ENCODE measurements at regions of chr11 and their contacts with region 1.

Region 1: GRCh38 chr11:24145411-24145810 is 351.4 kb upstream of the LUZP2 start:
- DNase-seq: no peak
- H3K4me3 ChIP-seq: no peak overlapping the region
- H3K4me3 Mint-ChIP-seq: no peak overlapping the region
- H3K27ac Mint-ChIP-seq: no peak overlapping the region
- H3K4me1 ChIP-seq: no peaks in the 10 kb centered on the region
- H3K4me1 Mint-ChIP-seq: no peaks in the 10 kb centered on the region
- H3K27me3 ChIP-seq: no peaks in the 10 kb centered on the region
- H3K27me3 Mint-ChIP-seq: peaks cover 3% of the 10 kb centered on the region
- CTCF ChIP-seq: no peak

Region 2: DNA sequence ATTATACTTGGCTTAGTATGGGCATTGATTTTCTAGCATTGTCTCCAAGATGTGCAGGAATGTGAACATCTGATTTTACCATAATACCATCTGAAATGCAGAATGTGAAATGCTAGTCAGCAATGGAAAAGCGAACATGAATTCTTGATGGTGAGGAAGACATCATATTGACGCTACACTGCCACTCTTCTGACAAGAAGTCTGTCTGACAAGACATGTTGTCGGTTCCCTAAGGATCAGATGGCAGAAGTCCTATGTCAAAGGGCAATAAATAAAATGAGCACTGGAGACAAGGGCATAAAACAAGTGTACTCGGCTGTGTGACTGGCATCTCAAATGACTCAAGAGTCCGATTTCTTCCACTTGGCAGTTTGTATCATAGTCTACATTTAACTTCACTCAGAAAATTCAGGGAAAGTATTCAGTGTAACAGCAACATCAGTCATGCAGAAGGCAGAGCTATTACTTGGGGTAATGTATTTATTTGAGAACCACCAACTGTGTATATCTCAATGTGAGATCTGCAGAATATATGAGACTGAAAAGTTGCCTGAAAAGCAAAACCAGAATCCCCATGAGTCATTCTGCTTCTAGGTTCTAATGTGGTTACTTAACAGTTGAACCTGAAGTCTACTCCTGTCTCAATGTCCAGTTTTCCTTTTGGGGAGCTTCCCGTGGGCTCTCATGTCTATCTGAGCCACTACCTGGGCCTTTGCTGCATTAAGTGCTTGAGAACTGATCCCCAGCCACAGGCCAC is 1755.7 kb before region 1 on chr11:
- CTCF ChIA-PET with region 1: no interaction called
- POLR2A ChIA-PET with region 1: no interaction called
- intact Hi-C with region 1: loop called (anchors 10 kb)
- DNase-seq: no peak
- H3K4me3 ChIP-seq: no peak overlapping the region
- H3K4me3 Mint-ChIP-seq: no peak overlapping the region
- H3K27ac Mint-ChIP-seq: no peak overlapping the region
- H3K4me1 ChIP-seq: no peaks in the 10 kb centered on the region
- H3K4me1 Mint-ChIP-seq: no peaks in the 10 kb centered on the region
- H3K27me3 ChIP-seq: no peaks in the 10 kb centered on the region; the same call in 1 of the 2 replicates
- H3K27me3 Mint-ChIP-seq: no peaks in the 10 kb centered on the region
- CTCF ChIP-seq: no peak

Measured in Caco-2 (cell line).